OCI-LY7 (cell line): ENCODE measurements at regions of chr14 and their contacts with region 1.

Region 1: DNA sequence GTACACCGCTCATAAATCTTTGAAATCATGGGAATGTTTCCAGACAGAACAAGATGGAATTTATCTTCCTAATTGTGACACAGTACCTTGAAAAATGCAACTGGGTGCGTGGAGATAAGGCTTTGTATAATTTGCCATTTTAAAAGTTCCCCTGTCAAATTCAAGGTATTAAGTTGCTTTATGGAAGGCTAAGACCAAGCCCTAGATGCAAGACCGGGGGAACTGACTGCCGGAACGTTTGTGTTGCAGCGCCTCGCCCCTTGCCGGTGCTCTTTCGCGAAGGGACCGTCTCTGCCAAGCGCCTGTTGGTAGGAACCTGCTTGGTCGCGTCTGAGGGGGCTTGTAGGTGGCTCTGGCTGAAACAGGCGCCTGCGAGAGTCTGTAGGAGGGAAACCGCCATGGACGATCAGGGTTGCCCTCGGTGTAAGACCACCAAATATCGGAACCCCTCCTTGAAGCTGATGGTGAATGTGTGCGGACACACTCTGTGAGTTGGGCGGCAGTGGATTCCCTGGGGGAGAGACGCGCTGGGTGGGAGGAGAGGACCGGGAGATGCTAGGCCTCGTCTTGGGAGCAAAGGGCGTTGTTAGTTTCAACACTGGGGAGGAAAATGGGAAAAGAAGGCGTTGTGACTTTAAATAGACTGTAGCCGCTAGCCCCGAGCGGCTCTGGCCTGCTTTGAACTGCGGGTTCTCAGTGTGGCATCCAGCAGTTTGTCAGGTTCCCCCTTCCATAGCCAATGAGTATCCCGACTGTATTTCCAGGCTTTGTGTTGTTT is at the start of gene MNAT1:
- DNase-seq: peak; percentile 89
- H3K4me3 ChIP-seq: peak within 1 kb of the TSS; percentile 90
- H3K27ac ChIP-seq: peak within 1 kb of the TSS; percentile 21
- H3K4me1 ChIP-seq: peaks cover 10% of the 10 kb centered on the region
- CTCF ChIP-seq: no peak
- total RNA-seq, gene MNAT1: 58.5 and 72.0 TPM in 2 replicates

Region 2: GRCh38 chr14:60628892-60629291 is 105.8 kb before region 1 on chr14:
- CTCF ChIA-PET with region 1: no interaction called
- POLR2A ChIA-PET with region 1: no interaction called
- intact Hi-C with region 1: loop called (anchors 1 kb)
- DNase-seq: no peak
- H3K4me3 ChIP-seq: no peak overlapping the region
- H3K27ac ChIP-seq: no peak overlapping the region
- H3K4me1 ChIP-seq: peaks cover 5% of the 10 kb centered on the region
- CTCF ChIP-seq: no peak

Region 3: GRCh38 chr14:60656686-60657455 is 77.8 kb before region 1 on chr14:
- CTCF ChIA-PET with region 1: no interaction called
- POLR2A ChIA-PET with region 1: no interaction called
- intact Hi-C with region 1: loop called (anchors 2 kb)
- DNase-seq: peak; percentile 94
- H3K4me3 ChIP-seq: peak overlapping the region; percentile 70
- H3K27ac ChIP-seq: peak overlapping the region; percentile 68
- H3K4me1 ChIP-seq: peaks cover 37% of the 10 kb centered on the region
- CTCF ChIP-seq: peak; percentile 81

Region 4: DNA sequence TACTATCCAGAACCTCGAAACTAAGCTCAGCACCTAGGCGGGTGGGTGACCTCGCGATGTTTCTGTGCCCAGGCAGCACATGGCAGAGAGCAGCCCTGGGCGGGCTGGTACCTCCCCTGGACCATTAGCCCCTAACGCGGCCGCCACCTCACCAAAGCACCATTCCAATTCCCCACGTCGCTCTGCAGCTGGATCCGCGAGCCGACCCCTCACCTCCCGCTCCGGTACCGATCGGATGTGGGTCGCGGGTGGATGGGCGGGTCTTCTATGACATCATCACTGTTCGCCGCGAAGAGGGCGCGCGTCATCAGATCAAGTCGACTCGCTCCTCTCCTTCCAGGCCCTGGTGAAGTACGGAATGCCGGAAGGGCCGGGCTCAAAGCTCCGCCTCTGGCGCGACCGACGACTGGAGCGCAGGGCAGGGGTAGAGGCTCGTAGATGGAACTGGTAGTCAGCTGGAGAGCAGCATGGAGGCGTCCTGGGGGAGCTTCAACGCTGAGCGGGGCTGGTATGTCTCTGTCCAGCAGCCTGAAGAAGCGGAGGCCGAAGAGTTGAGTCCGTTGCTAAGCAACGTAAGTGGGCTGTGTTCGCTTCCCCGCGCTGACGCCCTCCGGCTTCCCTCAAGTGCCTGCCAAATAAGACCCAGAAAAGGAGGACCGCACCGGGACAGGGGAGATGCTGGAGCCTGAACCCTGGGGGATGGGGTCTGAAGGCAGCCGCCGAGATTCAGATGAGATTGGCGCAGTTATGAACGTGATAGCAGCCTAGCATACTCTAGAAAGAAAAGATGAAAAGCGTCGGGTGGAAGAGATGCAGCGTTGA is 246.4 kb after region 1 on chr14 and contains the starts of genes SLC38A6 and TRMT5:
- CTCF ChIA-PET with region 1: no interaction called
- POLR2A ChIA-PET with region 1: interaction called, 6 read pairs
- intact Hi-C with region 1: loop called (anchors 5 kb)
- DNase-seq: peak; percentile 88
- H3K4me3 ChIP-seq: peak within 1 kb of the TSS; percentile 81
- H3K27ac ChIP-seq: peak within 1 kb of the TSS; percentile 38
- H3K4me1 ChIP-seq: peaks cover 41% of the 10 kb centered on the region
- CTCF ChIP-seq: no peak
- total RNA-seq, gene SLC38A6: 12.9 and 16.8 TPM in 2 replicates
- total RNA-seq, gene TRMT5: 7.0 and 17.6 TPM in 2 replicates

Region 5: GRCh38 chr14:61025251-61026223 is 290.9 kb after region 1 on chr14:
- CTCF ChIA-PET with region 1: no interaction called
- POLR2A ChIA-PET with region 1: no interaction called
- intact Hi-C with region 1: loop called (anchors 10 kb)
- DNase-seq: peak; percentile 81
- H3K4me3 ChIP-seq: no peak overlapping the region
- H3K27ac ChIP-seq: no peak overlapping the region
- H3K4me1 ChIP-seq: peaks cover 20% of the 10 kb centered on the region
- CTCF ChIP-seq: peak; percentile 99